ENCODE measurements at regions of chr3 and their contacts with region 1.

Region 1: GRCh38 chr3:122443090-122443489 is 27.2 kb upstream of the WDR5B start:
- DNase-seq: no peak
- H3K4me3 ChIP-seq: peak overlapping the region; percentile 21; the same call in 1 of the 2 replicates
- H3K27ac ChIP-seq: peak overlapping the region; percentile 84
- H3K4me1 ChIP-seq: peaks cover 26% of the 10 kb centered on the region
- H3K27me3 ChIP-seq: no peaks in the 10 kb centered on the region
- CTCF ChIP-seq: no peak

Region 2: DNA sequence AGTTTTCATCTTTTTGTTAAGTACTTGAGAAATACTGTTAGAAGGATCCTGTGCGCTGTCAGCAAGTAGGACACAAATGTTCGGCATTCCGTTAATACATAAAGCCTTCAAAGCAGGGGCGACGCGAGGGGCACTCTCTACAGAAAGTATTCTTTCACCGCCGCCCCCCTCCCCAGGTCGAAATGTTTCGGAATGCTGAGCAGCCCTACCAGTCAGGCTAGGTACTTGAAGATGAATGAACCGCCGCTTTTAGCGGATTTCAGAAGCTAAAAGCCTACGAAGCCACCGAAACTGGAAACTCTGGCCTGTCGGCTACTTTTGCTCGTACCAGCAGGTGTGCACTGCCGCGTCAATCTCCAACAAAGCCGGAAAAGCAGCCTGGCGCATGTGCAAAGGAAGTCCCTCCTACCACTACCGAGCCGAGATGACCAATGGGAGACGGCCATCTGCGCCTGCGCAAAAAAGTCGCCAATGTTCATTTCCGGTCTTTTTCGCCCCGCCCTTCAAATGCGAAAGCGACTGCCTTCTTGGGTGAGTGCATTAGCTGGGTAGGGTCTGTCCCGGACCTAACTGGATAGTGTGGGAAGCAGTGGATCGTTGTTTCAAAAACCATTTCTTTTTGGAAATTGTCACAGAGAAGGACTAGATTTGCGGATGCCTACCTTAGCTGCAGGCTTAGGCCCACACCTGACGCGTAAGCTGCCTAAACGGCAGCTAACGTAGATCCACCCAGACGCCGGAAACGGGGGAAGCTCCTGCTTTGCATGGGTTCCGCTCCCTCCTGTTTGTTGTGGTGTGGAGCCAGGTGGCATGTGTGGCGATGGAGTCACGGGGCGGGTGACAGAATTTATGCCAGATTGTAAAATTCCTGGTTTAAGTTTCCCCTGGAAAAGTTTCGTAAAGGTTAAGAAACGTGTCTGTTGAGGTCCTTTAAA is 27.1 kb before region 1 on chr3 and contains the start of gene WDR5B:
- CTCF ChIA-PET with region 1: no interaction called
- POLR2A ChIA-PET with region 1: interaction called, 10 read pairs
- intact Hi-C with region 1: no loop called
- DNase-seq: peak; percentile 92 to 99
- H3K4me3 ChIP-seq: peak within 1 kb of the TSS; percentile 76
- H3K27ac ChIP-seq: peak within 1 kb of the TSS; percentile 76
- H3K4me1 ChIP-seq: peaks cover 19% of the 10 kb centered on the region
- H3K27me3 ChIP-seq: no peaks in the 10 kb centered on the region
- CTCF ChIP-seq: peak; percentile 23; the same call in 1 of the 2 replicates
- total RNA-seq, gene WDR5B: 4.5 and 5.8 TPM in 2 replicates

Region 3: DNA sequence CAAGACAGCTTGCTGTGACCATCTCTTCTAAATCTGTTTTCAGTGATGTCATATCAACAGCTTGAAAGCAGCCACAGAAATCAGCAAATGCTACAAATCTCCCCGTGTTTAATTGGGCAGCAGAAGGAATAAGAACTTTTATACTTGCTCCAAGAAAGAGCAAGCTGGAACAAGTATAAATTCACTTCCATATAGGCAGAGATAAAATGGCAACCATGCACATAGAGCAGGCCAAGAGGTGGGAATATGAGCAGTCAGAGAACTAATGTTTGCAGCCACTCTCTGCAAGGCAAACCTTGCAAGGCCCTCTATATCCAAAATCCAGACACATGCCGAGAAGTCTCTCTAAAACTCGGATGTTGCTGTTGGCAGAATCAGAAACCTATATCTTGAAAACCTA is 105.0 kb after region 1 on chr3:
- CTCF ChIA-PET with region 1: no interaction called
- POLR2A ChIA-PET with region 1: no interaction called
- intact Hi-C with region 1: no loop called
- DNase-seq: no peak
- H3K4me3 ChIP-seq: no peak overlapping the region
- H3K27ac ChIP-seq: no peak overlapping the region
- H3K4me1 ChIP-seq: no peaks in the 10 kb centered on the region
- H3K27me3 ChIP-seq: no peaks in the 10 kb centered on the region
- CTCF ChIP-seq: no peak

Measured in PC-9 (cell line).